ENCODE measurements at regions of chr18 and their contacts with region 1.

Region 1: DNA sequence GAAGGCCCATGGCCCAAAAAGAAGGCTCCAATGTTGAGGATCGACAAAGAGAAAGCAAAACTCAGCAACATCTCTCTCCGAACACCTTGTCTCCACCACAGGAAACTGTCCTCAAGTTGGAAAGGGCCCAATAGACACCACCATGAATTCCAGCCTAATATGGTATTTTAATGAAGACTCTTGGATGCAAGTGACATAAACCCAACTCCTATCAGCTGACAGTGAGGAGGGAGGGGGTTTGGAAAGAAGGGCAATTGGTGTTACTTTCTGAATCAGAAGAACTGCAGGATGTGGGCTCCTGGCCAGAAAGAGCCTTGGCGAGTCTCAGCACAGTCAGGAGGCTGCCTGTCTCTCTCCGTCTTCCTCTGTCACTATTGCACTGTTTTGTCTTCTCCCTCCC is 40.3 kb upstream of the SIGLEC15 start:
- DNase-seq: peak in 1 of 2 donors; percentile 21
- ATAC-seq: peak in 4 of 8 donors; percentile 21 to 81 (median 46)
- H3K4me3 ChIP-seq: no peak overlapping the region
- H3K27ac ChIP-seq: no peak overlapping the region
- H3K4me1 ChIP-seq: peaks cover 0 to 17% (median 7%) of the 10 kb centered on the region in 9 donors
- H3K27me3 ChIP-seq: peaks cover 0 to 6% (median 0%) of the 10 kb centered on the region in 7 donors
- CTCF ChIP-seq: no peak

Region 2: GRCh38 chr18:45482286-45482685 is 302.8 kb before region 1 on chr18:
- intact Hi-C with region 1: no loop called
- DNase-seq: no peak
- ATAC-seq: peak in 2 of 8 donors; percentile 22 to 24
- H3K4me3 ChIP-seq: peak overlapping the region in 1 of 10 donors; percentile 1
- H3K27ac ChIP-seq: no peak overlapping the region
- H3K4me1 ChIP-seq: no peaks in the 10 kb centered on the region
- H3K27me3 ChIP-seq: peaks cover 0 to 8% (median 0%) of the 10 kb centered on the region in 7 donors
- CTCF ChIP-seq: no peak

Region 3: DNA sequence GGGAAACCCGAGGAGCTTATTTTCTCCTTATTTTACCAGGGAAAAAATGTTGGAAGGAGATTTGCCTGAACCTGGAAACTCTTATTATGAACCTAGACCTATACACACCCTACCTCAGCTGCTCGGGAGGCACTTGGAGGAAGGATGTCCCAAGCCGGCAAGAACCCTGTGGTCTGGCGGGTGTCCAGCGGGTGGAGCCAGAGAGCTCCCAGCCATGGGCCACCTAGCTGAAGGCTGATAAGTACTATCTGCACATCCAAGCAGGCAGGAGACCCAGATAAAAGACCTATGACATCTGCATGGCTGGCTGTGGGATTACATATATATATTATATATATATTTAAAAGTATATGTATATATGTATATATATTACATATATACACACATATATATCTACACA is 62.2 kb before region 1 on chr18:
- intact Hi-C with region 1: loop called in 1 of 10 experiments (anchors 10 kb)
- DNase-seq: peak; percentile 71 to 79
- ATAC-seq: peak in 7 of 8 donors; percentile 68 to 87 (median 80)
- H3K4me3 ChIP-seq: no peak overlapping the region
- H3K27ac ChIP-seq: no peak overlapping the region
- H3K4me1 ChIP-seq: peaks cover 0 to 5% (median 0%) of the 10 kb centered on the region in 9 donors
- H3K27me3 ChIP-seq: peaks cover 0 to 18% (median 4%) of the 10 kb centered on the region in 7 donors
- CTCF ChIP-seq: peak; percentile 42 to 86 (median 75)

Region 4: GRCh38 chr18:45774065-45774521 is 11.0 kb before region 1 on chr18:
- intact Hi-C with region 1: no loop called
- DNase-seq: no peak
- ATAC-seq: no peak
- H3K4me3 ChIP-seq: no peak overlapping the region
- H3K27ac ChIP-seq: no peak overlapping the region
- H3K4me1 ChIP-seq: peaks cover 0 to 21% (median 7%) of the 10 kb centered on the region in 9 donors
- H3K27me3 ChIP-seq: peaks cover 0 to 6% (median 0%) of the 10 kb centered on the region in 7 donors
- CTCF ChIP-seq: no peak

Region 5: GRCh38 chr18:45829855-45830254 is 44.7 kb after region 1 on chr18:
- intact Hi-C with region 1: loop called in 1 of 10 experiments (anchors 2 kb)
- DNase-seq: no peak
- ATAC-seq: no peak
- H3K4me3 ChIP-seq: no peak overlapping the region
- H3K27ac ChIP-seq: no peak overlapping the region
- H3K4me1 ChIP-seq: peaks cover 0 to 33% (median 4%) of the 10 kb centered on the region in 9 donors
- H3K27me3 ChIP-seq: peaks cover 0 to 20% (median 0%) of the 10 kb centered on the region in 7 donors
- CTCF ChIP-seq: no peak

Measured in heart right ventricle (tissue), 16 donors.